Ovary (tissue), 10 donors: ENCODE measurements at regions of chr15 and their contacts with region 1.

Region 1: DNA sequence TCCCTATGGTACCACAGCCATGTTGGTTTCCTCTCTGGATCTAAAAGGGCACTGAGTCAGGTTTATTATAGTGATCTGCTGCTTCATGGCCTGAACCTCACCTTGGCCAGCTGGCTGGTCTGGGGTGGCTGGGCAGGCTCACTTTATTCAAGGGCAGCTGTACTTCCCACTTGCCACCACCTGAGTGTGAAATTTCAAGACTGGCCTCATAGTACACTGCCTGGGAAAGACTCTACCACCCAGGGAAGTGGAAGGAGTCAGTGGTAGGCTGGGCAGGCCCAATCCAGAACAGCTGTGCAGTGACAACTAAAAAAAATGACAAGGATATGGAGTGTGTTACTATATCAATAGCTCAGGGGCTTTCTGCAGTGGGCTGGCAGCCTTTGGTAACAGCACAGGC is 8.8 kb downstream of the SNUPN start:
- DNase-seq: no peak
- H3K4me3 ChIP-seq: no peak overlapping the region
- H3K27ac ChIP-seq: no peak overlapping the region
- H3K4me1 ChIP-seq: peaks cover 14% of the 10 kb centered on the region
- H3K27me3 ChIP-seq: no peaks in the 10 kb centered on the region
- CTCF ChIP-seq: no peak
- EP300 ChIP-seq: no peak
- POLR2A ChIP-seq: no peak

Region 2: DNA sequence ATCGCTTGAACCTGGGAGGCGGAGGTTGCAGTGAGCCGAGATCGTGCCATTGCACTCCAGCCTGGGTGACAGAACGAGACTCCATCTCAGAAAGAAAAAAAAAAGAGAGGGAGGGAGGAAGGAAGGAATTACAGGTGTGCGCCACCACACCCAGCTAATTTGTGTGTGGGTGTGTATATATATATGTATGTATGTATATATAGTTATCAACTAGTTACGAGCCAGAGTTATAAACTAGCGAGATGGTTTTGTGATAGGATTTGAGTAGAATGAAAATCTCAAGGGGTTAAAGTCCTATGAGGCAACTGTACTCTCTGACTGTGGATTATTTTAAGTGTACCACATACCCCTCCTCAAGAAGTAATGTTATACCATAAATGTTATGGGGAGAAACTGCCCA is 114.4 kb before region 1 on chr15:
- intact Hi-C with region 1: no loop called
- DNase-seq: no peak
- H3K4me3 ChIP-seq: no peak overlapping the region
- H3K27ac ChIP-seq: no peak overlapping the region
- H3K4me1 ChIP-seq: no peaks in the 10 kb centered on the region
- H3K27me3 ChIP-seq: no peaks in the 10 kb centered on the region
- CTCF ChIP-seq: no peak
- EP300 ChIP-seq: no peak
- POLR2A ChIP-seq: no peak

Region 3: GRCh38 chr15:75517233-75517632 is 99.5 kb before region 1 on chr15:
- intact Hi-C with region 1: loop called in 2 of 4 experiments (anchors 10 kb)
- DNase-seq: no peak
- H3K4me3 ChIP-seq: no peak overlapping the region
- H3K27ac ChIP-seq: no peak overlapping the region
- H3K4me1 ChIP-seq: no peaks in the 10 kb centered on the region
- H3K27me3 ChIP-seq: no peaks in the 10 kb centered on the region
- CTCF ChIP-seq: no peak
- EP300 ChIP-seq: no peak
- POLR2A ChIP-seq: no peak

Region 4: DNA sequence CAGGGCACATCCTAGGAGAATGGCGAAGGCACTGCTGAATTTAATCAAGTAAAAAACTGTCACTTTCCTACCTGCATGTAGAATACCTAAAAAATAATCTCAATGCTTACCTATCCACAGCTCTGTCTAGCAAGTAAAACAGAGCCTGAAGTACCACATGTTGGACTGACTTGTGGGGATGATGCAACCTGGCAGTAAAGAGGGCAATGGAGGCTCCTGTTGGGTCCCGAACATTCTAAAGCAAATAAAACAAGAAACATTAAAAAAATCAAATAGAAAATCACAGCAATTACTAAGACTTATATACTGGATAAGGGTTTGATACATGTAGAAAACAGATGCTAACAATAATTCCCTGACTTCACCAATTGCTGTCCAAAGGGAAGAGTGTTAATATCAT is 93.8 kb before region 1 on chr15:
- intact Hi-C with region 1: loop called in 2 of 4 experiments (anchors 10 kb)
- DNase-seq: no peak
- H3K4me3 ChIP-seq: no peak overlapping the region
- H3K27ac ChIP-seq: no peak overlapping the region
- H3K4me1 ChIP-seq: no peaks in the 10 kb centered on the region
- H3K27me3 ChIP-seq: no peaks in the 10 kb centered on the region
- CTCF ChIP-seq: no peak
- EP300 ChIP-seq: no peak
- POLR2A ChIP-seq: no peak